ENCODE measurements at regions of chr17 and their contacts with region 1.

Region 1: DNA sequence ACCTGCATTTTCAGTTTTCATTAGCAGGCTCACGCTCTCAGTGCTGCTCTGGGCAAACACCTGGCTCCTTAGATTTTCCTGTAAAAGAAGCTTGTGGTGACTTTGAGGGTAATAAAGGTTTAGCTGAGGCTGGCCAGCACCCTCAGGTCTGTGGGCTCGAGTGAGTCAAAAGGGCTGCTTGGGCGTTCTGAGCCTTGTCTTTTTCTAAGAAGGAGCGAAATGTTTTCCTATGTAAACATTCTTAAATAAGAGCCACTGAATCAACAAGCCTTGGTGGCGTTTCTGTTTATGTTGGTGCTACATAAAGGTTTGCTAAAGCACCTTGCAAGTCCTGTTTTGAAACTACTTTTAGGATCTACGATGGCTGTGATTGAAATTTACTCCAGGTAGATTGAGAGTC is 38.8 kb downstream of the SHISA6 start:
- DNase-seq: no peak

Region 2: GRCh38 chr17:9905902-9906301 is 1373.9 kb before region 1 on chr17:
- intact Hi-C with region 1: loop called in 1 of 2 experiments (anchors 5 kb)
- DNase-seq: peak; percentile 88